Vagina (tissue), 2 donors: ENCODE measurements at regions of chr3 and their contacts with region 1.

Region 1: GRCh38 chr3:63349583-63350521 is 71.7 kb downstream of the SYNPR start:
- DNase-seq: no peak
- H3K4me3 ChIP-seq: no peak overlapping the region
- H3K27ac ChIP-seq: no peak overlapping the region
- H3K4me1 ChIP-seq: no peaks in the 10 kb centered on the region
- H3K27me3 ChIP-seq: no peaks in the 10 kb centered on the region
- CTCF ChIP-seq: peak; percentile 34 to 46 (median 45)
- POLR2A ChIP-seq: no peak

Region 2: GRCh38 chr3:63661248-63661647 is 311.4 kb after region 1 on chr3:
- intact Hi-C with region 1: no loop called
- DNase-seq: no peak
- H3K4me3 ChIP-seq: no peak overlapping the region
- H3K27ac ChIP-seq: no peak overlapping the region
- H3K4me1 ChIP-seq: no peaks in the 10 kb centered on the region
- H3K27me3 ChIP-seq: no peaks in the 10 kb centered on the region
- CTCF ChIP-seq: no peak
- POLR2A ChIP-seq: no peak

Region 3: GRCh38 chr3:63817225-63817624 is 467.4 kb after region 1 on chr3:
- intact Hi-C with region 1: loop called (anchors 2 kb)
- DNase-seq: no peak
- H3K4me3 ChIP-seq: no peak overlapping the region
- H3K27ac ChIP-seq: no peak overlapping the region
- H3K4me1 ChIP-seq: no peaks in the 10 kb centered on the region
- H3K27me3 ChIP-seq: no peaks in the 10 kb centered on the region
- CTCF ChIP-seq: no peak
- POLR2A ChIP-seq: no peak

Region 4: GRCh38 chr3:63993653-63994079 is 643.8 kb after region 1 on chr3:
- intact Hi-C with region 1: loop called (anchors 10 kb)
- DNase-seq: no peak
- H3K4me3 ChIP-seq: no peak overlapping the region
- H3K27ac ChIP-seq: no peak overlapping the region
- H3K4me1 ChIP-seq: no peaks in the 10 kb centered on the region
- H3K27me3 ChIP-seq: no peaks in the 10 kb centered on the region
- CTCF ChIP-seq: peak; percentile 91 to 92 (median 91)
- POLR2A ChIP-seq: no peak